B cell (primary cell): ENCODE measurements at regions of chr15 and their contacts with region 1.

Region 1: DNA sequence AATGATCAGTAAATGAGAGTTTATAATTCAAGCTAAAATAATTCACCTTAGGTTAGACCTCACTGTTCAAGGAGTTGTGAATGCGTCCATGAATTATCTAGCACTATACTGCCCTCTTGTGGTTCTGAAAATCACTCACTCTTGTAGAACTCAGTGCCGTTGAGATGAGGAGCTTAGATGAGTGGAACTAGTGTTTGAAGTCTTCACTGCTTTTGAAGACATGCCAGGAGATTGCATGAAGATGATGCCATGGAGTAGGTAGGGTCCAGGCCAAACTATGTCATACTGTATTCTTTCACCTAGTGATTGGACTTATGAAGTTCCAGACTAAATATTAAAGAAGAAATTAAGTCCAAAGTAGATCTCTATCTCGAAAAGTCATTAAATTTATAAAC is 28.8 kb downstream of the LYSMD4 start:
- DNase-seq: peak; percentile 87
- ATAC-seq: peak; percentile 80
- H3K4me3 ChIP-seq: no peak overlapping the region
- H3K4me3 Mint-ChIP-seq: no peak overlapping the region
- H3K27ac ChIP-seq: peak overlapping the region in 1 of 2 donors; percentile 91
- H3K27ac Mint-ChIP-seq: no peak overlapping the region
- H3K4me1 ChIP-seq: peaks cover 15 to 18% of the 10 kb centered on the region in 2 donors
- H3K4me1 Mint-ChIP-seq: peaks cover 28% of the 10 kb centered on the region
- H3K27me3 ChIP-seq: no peaks in the 10 kb centered on the region
- H3K27me3 Mint-ChIP-seq: no peaks in the 10 kb centered on the region
- CTCF ChIP-seq: peak; percentile 76

Region 2: GRCh38 chr15:99282121-99282520 is 422.3 kb before region 1 on chr15:
- CTCF ChIA-PET with region 1: interaction called, 187 read pairs
- POLR2A ChIA-PET with region 1: no interaction called
- intact Hi-C with region 1: loop called (anchors 1 kb)
- DNase-seq: no peak
- ATAC-seq: no peak
- H3K4me3 ChIP-seq: no peak overlapping the region
- H3K4me3 Mint-ChIP-seq: no peak overlapping the region
- H3K27ac ChIP-seq: no peak overlapping the region
- H3K27ac Mint-ChIP-seq: no peak overlapping the region
- H3K4me1 ChIP-seq: no peaks in the 10 kb centered on the region
- H3K4me1 Mint-ChIP-seq: peaks cover 9% of the 10 kb centered on the region
- H3K27me3 ChIP-seq: no peaks in the 10 kb centered on the region
- H3K27me3 Mint-ChIP-seq: no peaks in the 10 kb centered on the region
- CTCF ChIP-seq: no peak

Region 3: DNA sequence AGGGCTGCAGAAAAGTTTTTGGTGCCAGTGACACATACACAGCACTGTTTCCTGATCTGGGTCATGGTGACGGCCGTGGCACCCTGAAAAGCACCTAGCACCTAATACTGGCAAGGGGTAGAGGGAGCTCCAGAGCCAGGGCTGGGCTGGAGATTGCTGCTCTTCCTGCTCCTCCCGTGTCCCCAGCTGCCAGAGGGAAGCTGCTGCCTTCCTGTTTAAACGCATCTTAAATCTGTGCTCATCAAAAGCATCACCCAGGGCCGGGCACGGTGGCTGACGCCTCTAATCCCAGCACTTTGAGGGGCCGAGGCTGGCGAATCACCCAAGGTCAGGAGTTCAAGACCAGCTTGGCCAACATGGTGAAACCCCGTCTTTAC is 295.4 kb before region 1 on chr15:
- CTCF ChIA-PET with region 1: interaction called, 44 read pairs
- POLR2A ChIA-PET with region 1: no interaction called
- intact Hi-C with region 1: loop called (anchors 1 kb)
- DNase-seq: peak; percentile 49
- ATAC-seq: peak; percentile 53
- H3K4me3 ChIP-seq: no peak overlapping the region
- H3K4me3 Mint-ChIP-seq: no peak overlapping the region
- H3K27ac ChIP-seq: no peak overlapping the region
- H3K27ac Mint-ChIP-seq: peak overlapping the region; percentile 26
- H3K4me1 ChIP-seq: peaks cover 0 to 5% of the 10 kb centered on the region in 2 donors
- H3K4me1 Mint-ChIP-seq: peaks cover 3% of the 10 kb centered on the region
- H3K27me3 ChIP-seq: no peaks in the 10 kb centered on the region
- H3K27me3 Mint-ChIP-seq: no peaks in the 10 kb centered on the region
- CTCF ChIP-seq: no peak

Region 4: DNA sequence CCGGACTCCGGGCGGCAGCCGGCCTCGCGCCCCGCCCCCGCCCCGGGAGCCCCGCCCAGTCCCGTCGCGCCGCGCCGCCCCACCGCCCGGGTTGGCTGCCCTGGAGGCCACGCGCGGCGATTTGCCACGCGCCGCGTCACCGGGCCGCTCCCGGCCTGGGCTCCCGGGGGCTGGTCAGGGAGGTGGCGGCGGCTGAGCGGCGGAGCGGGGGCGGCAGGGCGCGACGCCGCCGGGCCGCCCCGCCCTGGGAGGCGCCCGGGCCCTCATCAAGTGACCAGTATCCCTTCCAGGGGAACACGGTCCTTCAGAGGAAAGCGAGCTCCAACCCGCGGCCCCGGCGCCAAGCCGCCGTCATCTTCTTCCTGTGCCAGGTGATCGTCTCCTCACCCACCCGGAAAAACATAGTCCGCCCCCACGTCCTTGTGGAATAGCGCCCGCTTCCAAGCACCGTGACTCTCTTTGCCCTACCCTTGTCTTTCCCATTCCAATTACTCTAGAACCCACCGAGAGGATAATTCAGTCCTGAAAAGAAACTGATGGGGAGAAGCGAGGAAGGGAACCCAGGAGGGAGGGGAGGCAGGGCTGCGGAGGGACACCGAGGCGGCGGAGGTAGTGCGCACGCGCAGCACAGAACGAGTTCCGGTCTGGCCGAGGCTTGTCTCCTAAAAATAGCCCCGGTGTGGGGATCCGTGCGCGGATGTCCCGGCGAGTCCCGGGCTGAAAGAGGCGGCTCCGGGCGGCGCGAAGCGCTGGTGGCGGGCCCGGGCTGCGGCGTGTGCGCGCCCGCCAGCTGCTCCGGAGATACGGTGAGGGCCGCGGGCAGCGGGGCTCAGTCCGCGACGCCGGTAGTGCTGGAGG is 138.9 kb before region 1 on chr15 and contains the start of gene MEF2A:
- CTCF ChIA-PET with region 1: interaction called, 49 read pairs
- POLR2A ChIA-PET with region 1: no interaction called
- intact Hi-C with region 1: loop called (anchors 2 kb)
- DNase-seq: peak; percentile 98
- ATAC-seq: peak; percentile 71
- H3K4me3 ChIP-seq: peak within 1 kb of the TSS; percentile 75 to 96 (median 91)
- H3K4me3 Mint-ChIP-seq: peak within 1 kb of the TSS; percentile 100
- H3K27ac ChIP-seq: peak within 1 kb of the TSS; percentile 98 to 99
- H3K27ac Mint-ChIP-seq: peak within 1 kb of the TSS; percentile 99
- H3K4me1 ChIP-seq: peaks cover 33 to 37% of the 10 kb centered on the region in 2 donors
- H3K4me1 Mint-ChIP-seq: peaks cover 48% of the 10 kb centered on the region
- H3K27me3 ChIP-seq: no peaks in the 10 kb centered on the region
- H3K27me3 Mint-ChIP-seq: no peaks in the 10 kb centered on the region
- CTCF ChIP-seq: no peak
- total RNA-seq, gene MEF2A: 102 and 104 TPM in 2 replicates

Region 5: DNA sequence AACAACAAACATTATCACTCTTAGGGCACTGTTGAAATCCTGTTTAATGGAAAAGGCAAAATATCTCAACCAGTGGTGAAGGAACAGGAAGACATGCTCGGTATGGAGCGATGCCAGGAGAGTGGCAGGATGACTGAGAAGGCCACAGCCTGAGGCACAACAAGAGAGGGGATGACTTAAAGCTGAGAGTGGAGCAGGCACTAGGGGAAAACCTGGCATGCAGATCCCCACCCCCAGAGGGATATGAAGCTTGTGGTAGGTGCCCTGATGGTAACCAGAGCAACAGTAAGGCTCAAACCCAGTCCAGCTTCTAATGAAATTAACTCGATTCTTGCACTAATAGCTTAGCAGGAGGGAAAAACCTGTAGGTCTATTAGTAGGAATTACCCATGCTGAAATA is 11.6 kb before region 1 on chr15:
- CTCF ChIA-PET with region 1: interaction called, 18 read pairs
- POLR2A ChIA-PET with region 1: interaction called, 3 read pairs
- intact Hi-C with region 1: no loop called
- DNase-seq: no peak
- ATAC-seq: no peak
- H3K4me3 ChIP-seq: no peak overlapping the region
- H3K4me3 Mint-ChIP-seq: no peak overlapping the region
- H3K27ac ChIP-seq: no peak overlapping the region
- H3K27ac Mint-ChIP-seq: no peak overlapping the region
- H3K4me1 ChIP-seq: no peaks in the 10 kb centered on the region
- H3K4me1 Mint-ChIP-seq: no peaks in the 10 kb centered on the region
- H3K27me3 ChIP-seq: no peaks in the 10 kb centered on the region
- H3K27me3 Mint-ChIP-seq: no peaks in the 10 kb centered on the region
- CTCF ChIP-seq: no peak

Region 6: DNA sequence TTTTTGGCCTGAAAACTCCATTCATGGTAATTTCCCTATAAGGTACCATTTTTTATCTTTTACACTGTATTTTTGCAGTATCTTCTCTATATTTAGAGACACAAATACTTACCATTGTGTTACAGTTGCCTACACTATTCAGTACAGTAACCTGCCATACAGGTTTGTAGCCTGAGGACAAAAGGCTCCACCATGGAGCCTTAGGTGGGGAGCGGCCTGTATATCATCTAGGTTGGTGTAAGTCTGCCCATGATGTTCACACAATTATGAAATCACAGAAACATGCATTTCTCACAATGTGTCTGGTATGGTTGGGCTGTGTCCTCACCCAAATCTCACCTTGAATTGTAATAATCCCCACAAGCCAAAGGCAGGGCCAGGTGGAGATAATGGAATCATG is 72.7 kb after region 1 on chr15:
- CTCF ChIA-PET with region 1: no interaction called
- POLR2A ChIA-PET with region 1: no interaction called
- intact Hi-C with region 1: no loop called
- DNase-seq: no peak
- ATAC-seq: no peak
- H3K4me3 ChIP-seq: no peak overlapping the region
- H3K4me3 Mint-ChIP-seq: no peak overlapping the region
- H3K27ac ChIP-seq: no peak overlapping the region
- H3K27ac Mint-ChIP-seq: no peak overlapping the region
- H3K4me1 ChIP-seq: no peaks in the 10 kb centered on the region
- H3K4me1 Mint-ChIP-seq: no peaks in the 10 kb centered on the region
- H3K27me3 ChIP-seq: no peaks in the 10 kb centered on the region
- H3K27me3 Mint-ChIP-seq: peaks cover 16% of the 10 kb centered on the region
- CTCF ChIP-seq: no peak